PC-3 (cell line): ENCODE measurements at regions of chr2 and their contacts with region 1.

Region 1: DNA sequence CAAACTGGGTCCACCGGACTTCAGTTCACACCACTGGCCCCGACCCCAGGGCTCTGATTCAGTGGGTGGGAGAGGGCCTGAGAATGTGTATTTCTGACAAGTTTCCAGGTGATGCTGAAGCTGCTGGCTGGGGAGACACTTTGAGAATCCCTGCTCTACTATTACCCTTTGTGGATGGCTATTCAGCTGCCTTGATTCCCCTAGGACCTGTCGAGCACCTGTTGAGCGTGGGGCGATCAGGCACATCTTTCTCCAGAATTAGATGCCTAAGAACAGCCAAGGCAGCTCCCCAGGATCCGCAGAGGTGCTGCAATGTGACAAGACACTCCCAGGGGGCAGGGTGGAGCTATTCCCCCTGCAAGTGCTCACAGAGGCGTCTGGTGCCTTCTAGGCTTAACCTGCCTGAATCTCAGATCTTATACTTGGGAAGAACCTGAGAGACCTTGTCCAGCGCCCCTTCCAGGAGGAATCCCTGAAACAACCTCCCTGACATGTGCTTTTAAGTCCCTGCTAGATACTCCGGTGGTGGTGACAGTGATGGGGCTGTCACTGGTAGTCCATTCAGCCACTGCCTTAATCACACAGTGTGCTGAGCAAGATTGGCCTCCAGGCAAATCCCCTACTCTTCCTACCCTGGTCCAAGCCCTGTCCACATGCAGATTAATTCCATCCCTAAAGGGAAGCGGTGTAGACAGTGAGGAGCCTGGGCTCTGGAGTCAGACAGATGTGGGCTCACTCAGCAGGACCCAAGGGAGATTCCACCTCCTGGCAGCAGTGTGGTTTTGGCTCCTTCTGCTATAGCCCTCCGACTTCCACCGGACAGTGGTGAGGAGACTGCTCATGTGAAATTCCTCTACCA is 43.4 kb upstream of the OTOF start:
- DNase-seq: peak; percentile 44
- ATAC-seq: peak; percentile 80
- H3K4me3 ChIP-seq: no peak overlapping the region
- H3K27ac ChIP-seq: no peak overlapping the region
- H3K4me1 ChIP-seq: 0 out of 2 replicates have a peak, but pooled peaks cover under 1% of the 10 kb centered on the region
- H3K27me3 ChIP-seq: peaks cover 36% of the 10 kb centered on the region
- CTCF ChIP-seq: peak; percentile 61

Region 2: GRCh38 chr2:26577434-26578112 is 56.3 kb after region 1 on chr2:
- CTCF ChIA-PET with region 1: interaction called, 7 read pairs
- POLR2A ChIA-PET with region 1: no interaction called
- intact Hi-C with region 1: loop called (anchors 1 kb)
- DNase-seq: peak; percentile 82
- ATAC-seq: peak; percentile 89
- H3K4me3 ChIP-seq: no peak overlapping the region
- H3K27ac ChIP-seq: no peak overlapping the region
- H3K4me1 ChIP-seq: no peaks in the 10 kb centered on the region; the same call in 1 of the 2 replicates
- H3K27me3 ChIP-seq: peaks cover 52% of the 10 kb centered on the region
- CTCF ChIP-seq: peak; percentile 95